Naive thymus-derived CD4-positive, alpha-beta T cell (primary cell): ENCODE measurements at regions of chr11 and their contacts with region 1.

Region 1: DNA sequence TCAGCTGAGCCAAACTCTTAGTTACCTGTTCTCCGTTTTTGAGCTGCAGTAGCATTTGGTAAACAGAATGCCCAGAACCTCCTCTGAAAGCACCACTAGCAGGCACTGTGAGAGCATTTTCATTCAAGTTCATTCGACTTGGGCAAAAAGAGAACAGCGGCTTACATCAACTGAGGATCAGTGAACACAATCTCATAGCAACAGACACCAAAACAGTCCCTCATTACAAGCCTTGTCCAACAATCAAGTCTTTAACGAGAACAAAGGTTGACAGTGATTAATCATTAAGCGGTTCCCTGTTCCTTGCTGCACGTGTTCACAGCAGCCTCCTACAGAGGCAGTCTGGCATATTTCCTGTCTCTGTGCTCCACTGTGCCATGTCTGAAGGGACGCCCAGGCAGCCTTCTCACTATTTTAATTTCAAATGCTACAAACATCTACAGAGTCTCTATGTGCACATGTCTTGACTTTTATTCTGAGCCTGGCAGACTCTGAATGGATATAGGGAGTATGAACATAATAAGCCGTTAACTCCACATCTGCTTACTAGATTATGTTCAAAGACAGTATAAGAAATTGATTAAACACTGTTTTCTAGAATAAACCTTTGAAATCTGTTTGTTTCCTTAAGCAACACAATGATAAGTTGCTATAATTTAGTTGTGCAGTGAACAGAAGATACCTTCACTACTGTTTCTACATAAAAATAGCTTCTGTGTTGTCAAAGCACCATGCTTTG is 88.3 kb upstream of the MTMR2 start:
- DNase-seq: peak in 8 of 9 donors; percentile 23 to 89 (median 80)
- ATAC-seq: peak; percentile 83
- H3K4me3 ChIP-seq: no peak overlapping the region
- H3K4me3 Mint-ChIP-seq: peak overlapping the region; percentile 58 to 87 (median 71)
- H3K27ac ChIP-seq: peak overlapping the region; percentile 58
- H3K27ac Mint-ChIP-seq: peak overlapping the region in 6 of 9 donors; percentile 76 to 98 (median 96)
- H3K4me1 ChIP-seq: peaks cover 39 to 52% of the 10 kb centered on the region in 2 donors
- H3K4me1 Mint-ChIP-seq: peaks cover 12 to 50% (median 28%) of the 10 kb centered on the region in 7 donors
- H3K27me3 ChIP-seq: no peaks in the 10 kb centered on the region
- H3K27me3 Mint-ChIP-seq: no peaks in the 10 kb centered on the region

Region 2: DNA sequence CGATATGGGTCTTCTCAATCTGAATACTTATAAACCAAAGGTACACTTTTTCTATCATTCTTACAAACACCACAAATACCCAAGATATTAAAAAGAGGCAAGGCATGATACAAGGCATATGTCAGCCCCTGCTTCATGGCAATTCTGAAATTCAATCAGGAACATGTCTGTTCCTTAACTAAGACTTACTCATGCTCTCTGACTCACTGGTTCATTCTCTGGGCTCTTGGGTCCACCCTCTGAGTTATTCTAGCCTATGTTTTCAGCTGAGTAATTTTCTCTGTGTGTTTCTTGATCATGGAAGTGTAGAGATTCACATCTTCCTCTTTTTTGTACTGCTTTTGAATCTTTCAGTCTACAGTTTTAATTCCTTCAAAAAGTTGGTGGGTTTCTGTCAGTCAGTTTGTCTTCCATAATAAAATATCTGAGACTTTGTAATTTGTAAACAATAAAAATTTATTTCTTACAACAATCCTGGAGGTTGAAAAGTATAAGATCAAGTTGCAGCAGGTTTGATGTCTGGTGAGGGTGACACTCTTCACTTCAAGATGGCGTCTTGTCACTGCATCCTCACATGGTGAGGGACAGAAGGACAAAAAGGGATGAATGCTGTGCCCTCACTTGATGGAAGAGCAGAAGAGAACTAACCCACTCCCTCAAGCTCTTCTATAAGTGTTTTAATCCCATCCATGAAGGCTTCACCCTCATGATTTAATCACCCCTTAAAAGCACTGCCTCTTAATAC is 434.4 kb before region 1 on chr11:
- CTCF ChIA-PET with region 1: no interaction called
- POLR2A ChIA-PET with region 1: no interaction called
- intact Hi-C with region 1: no loop called
- DNase-seq: no peak
- ATAC-seq: peak; percentile 60
- H3K4me3 ChIP-seq: no peak overlapping the region
- H3K4me3 Mint-ChIP-seq: no peak overlapping the region
- H3K27ac ChIP-seq: no peak overlapping the region
- H3K27ac Mint-ChIP-seq: peak overlapping the region in 1 of 9 donors; percentile 14
- H3K4me1 ChIP-seq: no peaks in the 10 kb centered on the region
- H3K4me1 Mint-ChIP-seq: peaks cover 0 to 5% (median 0%) of the 10 kb centered on the region in 7 donors
- H3K27me3 ChIP-seq: no peaks in the 10 kb centered on the region
- H3K27me3 Mint-ChIP-seq: no peaks in the 10 kb centered on the region

Region 3: DNA sequence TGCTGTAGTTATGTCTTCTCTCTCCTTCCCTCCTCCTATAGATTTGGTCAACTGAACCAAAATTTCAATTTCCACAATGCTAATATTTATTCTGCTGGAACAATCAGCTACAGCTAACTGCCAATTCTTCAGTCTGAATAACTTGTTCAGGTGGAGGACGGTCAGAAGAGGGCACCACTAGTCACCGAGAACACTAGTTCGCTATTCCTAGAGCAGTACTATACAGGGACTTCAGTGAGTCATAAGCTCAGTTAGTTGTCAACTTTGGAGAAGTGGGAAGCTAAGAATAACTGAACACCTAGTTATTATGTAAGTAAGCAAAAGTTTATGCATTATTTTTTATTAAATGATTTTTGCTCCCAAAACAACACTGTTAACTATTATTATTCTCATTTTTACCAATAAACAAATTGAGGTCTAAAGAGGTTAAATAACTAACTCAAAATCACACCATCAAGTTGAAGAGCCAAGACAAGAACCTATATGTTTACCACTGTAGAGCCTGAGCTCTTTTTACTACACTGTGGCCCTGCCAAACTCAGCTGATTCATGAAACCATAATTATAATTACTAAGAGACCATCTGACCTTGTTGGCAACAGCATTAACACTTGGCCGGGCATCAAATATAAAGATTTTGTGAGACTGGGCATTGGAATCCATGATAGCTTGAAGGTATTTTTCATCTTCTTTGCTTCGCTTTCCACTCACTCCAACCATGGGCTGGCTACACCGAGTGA is 163.0 kb before region 1 on chr11:
- CTCF ChIA-PET with region 1: interaction called, 3 read pairs
- POLR2A ChIA-PET with region 1: no interaction called
- intact Hi-C with region 1: loop called in 1 of 2 experiments (anchors 5 kb)
- DNase-seq: peak in 6 of 9 donors; percentile 2 to 39 (median 19)
- ATAC-seq: peak; percentile 64
- H3K4me3 ChIP-seq: no peak overlapping the region
- H3K4me3 Mint-ChIP-seq: no peak overlapping the region
- H3K27ac ChIP-seq: no peak overlapping the region
- H3K27ac Mint-ChIP-seq: peak overlapping the region in 2 of 9 donors; percentile 11 to 49
- H3K4me1 ChIP-seq: no peaks in the 10 kb centered on the region
- H3K4me1 Mint-ChIP-seq: no peaks in the 10 kb centered on the region
- H3K27me3 ChIP-seq: no peaks in the 10 kb centered on the region
- H3K27me3 Mint-ChIP-seq: no peaks in the 10 kb centered on the region

Region 4: GRCh38 chr11:96026310-96026709 is 14.1 kb after region 1 on chr11:
- CTCF ChIA-PET with region 1: interaction called, 6 read pairs
- POLR2A ChIA-PET with region 1: interaction called, 16 read pairs
- intact Hi-C with region 1: loop called in 1 of 2 experiments (anchors 1 kb)
- DNase-seq: no peak
- ATAC-seq: no peak
- H3K4me3 ChIP-seq: no peak overlapping the region
- H3K4me3 Mint-ChIP-seq: no peak overlapping the region
- H3K27ac ChIP-seq: no peak overlapping the region
- H3K27ac Mint-ChIP-seq: peak overlapping the region in 8 of 9 donors; percentile 45 to 80 (median 72)
- H3K4me1 ChIP-seq: peaks cover 0 to 17% of the 10 kb centered on the region in 2 donors
- H3K4me1 Mint-ChIP-seq: peaks cover 22 to 92% (median 85%) of the 10 kb centered on the region in 7 donors
- H3K27me3 ChIP-seq: no peaks in the 10 kb centered on the region
- H3K27me3 Mint-ChIP-seq: no peaks in the 10 kb centered on the region

Region 5: DNA sequence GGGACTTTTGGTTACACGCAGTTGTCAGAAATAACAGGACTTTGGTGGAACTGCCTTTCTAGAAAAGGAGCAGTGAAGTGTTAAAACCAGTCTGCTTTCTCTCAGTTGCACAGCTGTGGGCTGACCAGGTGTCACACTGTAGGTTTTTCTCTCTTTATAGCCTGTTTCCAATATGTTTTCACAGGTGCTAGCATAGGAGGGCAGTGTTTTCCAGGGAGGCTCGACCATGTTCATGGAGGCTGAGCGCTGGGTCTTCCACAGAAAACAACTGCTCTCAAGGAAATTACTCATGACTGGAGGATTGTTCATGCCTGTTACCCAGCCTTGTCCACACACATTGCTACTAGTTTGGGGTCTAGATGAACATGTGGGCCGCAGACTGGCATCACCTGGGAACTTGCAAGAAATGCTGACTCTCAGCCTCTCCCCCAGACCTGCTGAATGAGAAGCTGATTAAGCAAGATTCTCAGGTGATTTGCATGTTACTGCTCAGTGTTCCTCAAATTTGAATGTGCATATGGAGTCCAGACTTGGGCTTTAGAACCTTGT is 173.0 kb after region 1 on chr11:
- CTCF ChIA-PET with region 1: no interaction called
- POLR2A ChIA-PET with region 1: no interaction called
- intact Hi-C with region 1: no loop called
- DNase-seq: no peak
- ATAC-seq: no peak
- H3K4me3 ChIP-seq: no peak overlapping the region
- H3K4me3 Mint-ChIP-seq: no peak overlapping the region
- H3K27ac ChIP-seq: no peak overlapping the region
- H3K27ac Mint-ChIP-seq: peak overlapping the region in 5 of 9 donors; percentile 49 to 90 (median 63)
- H3K4me1 ChIP-seq: peaks cover 9 to 31% of the 10 kb centered on the region in 2 donors
- H3K4me1 Mint-ChIP-seq: peaks cover 34 to 95% (median 92%) of the 10 kb centered on the region in 7 donors
- H3K27me3 ChIP-seq: no peaks in the 10 kb centered on the region
- H3K27me3 Mint-ChIP-seq: no peaks in the 10 kb centered on the region

Region 6: GRCh38 chr11:96207459-96208449 is 195.5 kb after region 1 on chr11:
- CTCF ChIA-PET with region 1: no interaction called
- POLR2A ChIA-PET with region 1: no interaction called
- intact Hi-C with region 1: loop called in 1 of 2 experiments (anchors 2 kb)
- DNase-seq: peak in 7 of 9 donors; percentile 43 to 73 (median 57)
- ATAC-seq: peak; percentile 70
- H3K4me3 ChIP-seq: peak overlapping the region; percentile 9
- H3K4me3 Mint-ChIP-seq: peak overlapping the region; percentile 51 to 84 (median 74)
- H3K27ac ChIP-seq: peak overlapping the region; percentile 62
- H3K27ac Mint-ChIP-seq: peak overlapping the region; percentile 86 to 99 (median 95)
- H3K4me1 ChIP-seq: peaks cover 70 to 93% of the 10 kb centered on the region in 2 donors
- H3K4me1 Mint-ChIP-seq: peaks cover 45 to 96% (median 92%) of the 10 kb centered on the region in 7 donors
- H3K27me3 ChIP-seq: no peaks in the 10 kb centered on the region
- H3K27me3 Mint-ChIP-seq: no peaks in the 10 kb centered on the region

Region 7: DNA sequence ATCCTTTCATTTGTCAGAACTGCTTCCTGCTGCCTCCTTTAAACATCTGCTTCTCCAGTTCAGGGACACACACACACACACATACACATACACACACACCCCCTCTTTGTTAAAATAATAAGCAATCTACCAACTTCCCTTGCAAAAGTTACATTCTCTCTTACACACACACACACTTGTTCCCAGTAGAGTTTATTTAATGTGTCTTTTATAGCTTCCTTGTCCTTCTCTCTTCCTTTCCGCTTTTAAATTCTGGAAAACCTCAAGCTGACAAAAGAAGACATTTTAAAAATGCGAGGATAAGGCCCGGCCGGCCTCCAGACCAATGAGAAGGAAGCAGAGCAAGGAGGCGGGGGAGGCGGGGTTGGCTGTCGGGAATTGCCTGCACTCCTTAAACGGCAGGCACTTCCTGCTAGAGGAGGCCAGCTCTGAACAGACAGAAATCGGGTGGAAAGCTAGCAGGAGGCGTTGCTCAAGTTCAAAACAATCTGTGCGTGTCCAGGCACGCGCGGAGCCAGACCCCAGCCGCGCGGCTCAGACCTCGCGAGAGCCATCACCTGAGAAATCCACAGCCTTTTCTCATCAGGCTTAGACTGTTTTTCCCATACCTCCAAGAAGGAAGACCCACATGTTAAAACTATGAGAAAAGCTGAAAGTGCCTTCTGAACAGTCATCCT is 230.9 kb after region 1 on chr11:
- CTCF ChIA-PET with region 1: no interaction called
- POLR2A ChIA-PET with region 1: interaction called, 5 read pairs
- intact Hi-C with region 1: loop called (anchors 1 kb)
- DNase-seq: peak; percentile 47 to 83 (median 66)
- ATAC-seq: peak; percentile 92
- H3K4me3 ChIP-seq: peak overlapping the region; percentile 63
- H3K4me3 Mint-ChIP-seq: peak overlapping the region; percentile 76 to 89 (median 84)
- H3K27ac ChIP-seq: peak overlapping the region; percentile 72
- H3K27ac Mint-ChIP-seq: peak overlapping the region; percentile 86 to 94 (median 92)
- H3K4me1 ChIP-seq: peaks cover 8 to 61% of the 10 kb centered on the region in 2 donors
- H3K4me1 Mint-ChIP-seq: peaks cover 37 to 72% (median 63%) of the 10 kb centered on the region in 7 donors
- H3K27me3 ChIP-seq: no peaks in the 10 kb centered on the region
- H3K27me3 Mint-ChIP-seq: no peaks in the 10 kb centered on the region

Region 8: GRCh38 chr11:96306933-96307775 is 294.9 kb after region 1 on chr11:
- CTCF ChIA-PET with region 1: interaction called, 5 read pairs
- POLR2A ChIA-PET with region 1: no interaction called
- intact Hi-C with region 1: loop called in 1 of 2 experiments (anchors 1 kb)
- DNase-seq: peak in 7 of 9 donors; percentile 16 to 42 (median 28)
- ATAC-seq: peak; percentile 72
- H3K4me3 ChIP-seq: no peak overlapping the region
- H3K4me3 Mint-ChIP-seq: peak overlapping the region; percentile 62 to 91 (median 80)
- H3K27ac ChIP-seq: peak overlapping the region; percentile 56
- H3K27ac Mint-ChIP-seq: peak overlapping the region; percentile 19 to 91 (median 86)
- H3K4me1 ChIP-seq: peaks cover 3 to 32% of the 10 kb centered on the region in 2 donors
- H3K4me1 Mint-ChIP-seq: peaks cover 28 to 99% (median 91%) of the 10 kb centered on the region in 7 donors
- H3K27me3 ChIP-seq: no peaks in the 10 kb centered on the region
- H3K27me3 Mint-ChIP-seq: no peaks in the 10 kb centered on the region